ENCODE measurements at regions of chr6 and their contacts with region 1.

Region 1: GRCh38 chr6:138588805-138589434 is 89.6 kb upstream of the NHSL1 start:
- DNase-seq: peak; percentile 46 to 60 (median 52)
- H3K4me3 ChIP-seq: no peak overlapping the region
- H3K4me3 Mint-ChIP-seq: no peak overlapping the region
- H3K27ac ChIP-seq: no peak overlapping the region
- H3K27ac Mint-ChIP-seq: peak overlapping the region in 1 of 7 donors; percentile 0
- H3K4me1 ChIP-seq: peaks cover 16% of the 10 kb centered on the region
- H3K4me1 Mint-ChIP-seq: peaks cover 14 to 20% (median 19%) of the 10 kb centered on the region in 4 donors
- H3K27me3 ChIP-seq: no peaks in the 10 kb centered on the region
- H3K27me3 Mint-ChIP-seq: peaks cover 0 to 2% of the 10 kb centered on the region in 2 donors

Region 2: DNA sequence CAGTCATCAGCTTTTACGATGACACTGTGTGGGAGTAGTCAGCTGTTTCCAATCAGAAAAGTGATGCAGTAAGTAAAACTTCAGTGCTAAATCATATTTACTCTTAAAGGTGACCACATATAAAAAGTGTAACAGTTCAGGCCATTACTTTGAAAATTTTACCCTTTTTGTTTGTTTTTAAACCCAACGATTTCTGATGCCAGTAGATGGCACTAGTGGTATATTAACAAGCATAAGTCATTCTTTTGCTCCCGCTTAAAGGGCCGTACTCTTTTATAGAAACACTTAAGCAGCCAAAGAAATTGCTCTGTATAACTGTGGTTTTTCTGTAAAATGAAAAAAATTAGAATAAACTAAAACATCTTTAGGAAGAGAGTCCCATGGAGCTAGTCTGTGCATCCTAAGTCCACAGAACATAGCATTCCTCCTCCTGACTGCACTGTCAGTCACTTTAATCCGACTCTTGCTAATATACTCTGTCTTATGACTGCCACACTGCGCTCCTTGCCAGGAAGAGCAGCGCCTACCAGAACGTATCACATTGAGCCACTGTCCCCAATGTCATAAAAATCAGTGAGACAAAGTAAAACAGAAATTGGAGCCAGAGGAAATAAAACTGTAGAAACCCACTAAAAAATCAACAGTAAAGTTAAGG is 159.8 kb before region 1 on chr6:
- CTCF ChIA-PET with region 1: interaction called, 13 read pairs
- POLR2A ChIA-PET with region 1: no interaction called
- intact Hi-C with region 1: loop called (anchors 1 kb)
- DNase-seq: peak in 4 of 5 donors; percentile 45 to 55 (median 46)
- H3K4me3 ChIP-seq: no peak overlapping the region
- H3K4me3 Mint-ChIP-seq: no peak overlapping the region
- H3K27ac ChIP-seq: no peak overlapping the region
- H3K27ac Mint-ChIP-seq: no peak overlapping the region
- H3K4me1 ChIP-seq: peaks cover 4% of the 10 kb centered on the region
- H3K4me1 Mint-ChIP-seq: no peaks in the 10 kb centered on the region
- H3K27me3 ChIP-seq: no peaks in the 10 kb centered on the region
- H3K27me3 Mint-ChIP-seq: peaks cover 0 to 1% of the 10 kb centered on the region in 2 donors

Region 3: DNA sequence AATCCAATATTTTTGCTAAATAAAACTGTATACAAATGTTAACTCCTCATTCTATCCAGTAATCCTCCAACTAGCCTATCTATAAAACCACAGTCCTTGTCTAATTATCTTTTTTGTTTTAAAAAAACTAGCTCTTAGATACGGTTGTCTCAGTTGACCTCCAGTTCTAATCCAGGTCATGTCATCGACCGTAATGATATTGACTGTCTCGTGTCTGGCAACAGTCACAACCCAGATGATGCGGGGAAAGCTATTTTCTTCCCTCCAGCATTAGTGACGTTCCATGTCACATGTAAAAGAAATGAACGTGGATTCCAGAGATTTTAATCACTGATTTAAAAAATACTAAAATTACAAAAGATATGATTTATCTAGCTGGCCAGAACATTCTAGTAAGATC is 149.4 kb before region 1 on chr6:
- CTCF ChIA-PET with region 1: no interaction called
- POLR2A ChIA-PET with region 1: no interaction called
- intact Hi-C with region 1: no loop called
- DNase-seq: no peak
- H3K4me3 ChIP-seq: no peak overlapping the region
- H3K4me3 Mint-ChIP-seq: no peak overlapping the region
- H3K27ac ChIP-seq: no peak overlapping the region
- H3K27ac Mint-ChIP-seq: no peak overlapping the region
- H3K4me1 ChIP-seq: no peaks in the 10 kb centered on the region
- H3K4me1 Mint-ChIP-seq: no peaks in the 10 kb centered on the region
- H3K27me3 ChIP-seq: no peaks in the 10 kb centered on the region
- H3K27me3 Mint-ChIP-seq: no peaks in the 10 kb centered on the region

Region 4: DNA sequence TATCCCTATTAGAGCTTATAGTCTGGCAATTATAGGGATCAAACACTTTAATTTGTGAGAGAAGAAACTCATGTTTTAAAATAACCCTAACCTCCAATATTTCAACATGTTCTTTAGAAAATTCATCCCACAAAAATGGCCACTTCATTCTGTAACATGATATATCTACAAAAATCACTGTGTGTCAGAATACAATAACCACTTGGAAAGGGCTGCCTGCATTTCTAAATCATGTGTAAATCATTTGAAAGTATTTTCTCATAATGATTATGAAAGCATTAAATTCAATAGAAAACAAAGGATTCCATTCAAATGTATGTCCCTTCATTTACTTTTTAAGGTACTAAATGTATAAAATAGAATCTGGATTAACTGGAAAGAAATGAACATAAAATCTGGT is 11.8 kb after region 1 on chr6:
- CTCF ChIA-PET with region 1: interaction called, 17 read pairs
- POLR2A ChIA-PET with region 1: no interaction called
- intact Hi-C with region 1: no loop called
- DNase-seq: no peak
- H3K4me3 ChIP-seq: no peak overlapping the region
- H3K4me3 Mint-ChIP-seq: no peak overlapping the region
- H3K27ac ChIP-seq: no peak overlapping the region
- H3K27ac Mint-ChIP-seq: no peak overlapping the region
- H3K4me1 ChIP-seq: no peaks in the 10 kb centered on the region
- H3K4me1 Mint-ChIP-seq: no peaks in the 10 kb centered on the region
- H3K27me3 ChIP-seq: no peaks in the 10 kb centered on the region
- H3K27me3 Mint-ChIP-seq: peaks cover 6 to 8% of the 10 kb centered on the region in 2 donors

Region 5: GRCh38 chr6:138692058-138692977 is 103.4 kb after region 1 on chr6:
- CTCF ChIA-PET with region 1: no interaction called
- POLR2A ChIA-PET with region 1: no interaction called
- intact Hi-C with region 1: loop called (anchors 5 kb)
- DNase-seq: peak; percentile 35 to 65 (median 37)
- H3K4me3 ChIP-seq: peak overlapping the region in 1 of 2 donors; percentile 24
- H3K4me3 Mint-ChIP-seq: peak overlapping the region; percentile 77 to 87 (median 84)
- H3K27ac ChIP-seq: no peak overlapping the region
- H3K27ac Mint-ChIP-seq: peak overlapping the region in 3 of 7 donors; percentile 12 to 72 (median 32)
- H3K4me1 ChIP-seq: peaks cover 6% of the 10 kb centered on the region
- H3K4me1 Mint-ChIP-seq: peaks cover 3 to 15% (median 8%) of the 10 kb centered on the region in 4 donors
- H3K27me3 ChIP-seq: peaks cover 6% of the 10 kb centered on the region
- H3K27me3 Mint-ChIP-seq: peaks cover 13 to 15% of the 10 kb centered on the region in 2 donors

Region 6: GRCh38 chr6:138805016-138805765 is 216.3 kb after region 1 on chr6:
- CTCF ChIA-PET with region 1: no interaction called
- POLR2A ChIA-PET with region 1: no interaction called
- intact Hi-C with region 1: no loop called
- DNase-seq: no peak
- H3K4me3 ChIP-seq: no peak overlapping the region
- H3K4me3 Mint-ChIP-seq: no peak overlapping the region
- H3K27ac ChIP-seq: no peak overlapping the region
- H3K27ac Mint-ChIP-seq: no peak overlapping the region
- H3K4me1 ChIP-seq: no peaks in the 10 kb centered on the region
- H3K4me1 Mint-ChIP-seq: no peaks in the 10 kb centered on the region
- H3K27me3 ChIP-seq: no peaks in the 10 kb centered on the region
- H3K27me3 Mint-ChIP-seq: peaks cover 3 to 5% of the 10 kb centered on the region in 2 donors

Region 7: DNA sequence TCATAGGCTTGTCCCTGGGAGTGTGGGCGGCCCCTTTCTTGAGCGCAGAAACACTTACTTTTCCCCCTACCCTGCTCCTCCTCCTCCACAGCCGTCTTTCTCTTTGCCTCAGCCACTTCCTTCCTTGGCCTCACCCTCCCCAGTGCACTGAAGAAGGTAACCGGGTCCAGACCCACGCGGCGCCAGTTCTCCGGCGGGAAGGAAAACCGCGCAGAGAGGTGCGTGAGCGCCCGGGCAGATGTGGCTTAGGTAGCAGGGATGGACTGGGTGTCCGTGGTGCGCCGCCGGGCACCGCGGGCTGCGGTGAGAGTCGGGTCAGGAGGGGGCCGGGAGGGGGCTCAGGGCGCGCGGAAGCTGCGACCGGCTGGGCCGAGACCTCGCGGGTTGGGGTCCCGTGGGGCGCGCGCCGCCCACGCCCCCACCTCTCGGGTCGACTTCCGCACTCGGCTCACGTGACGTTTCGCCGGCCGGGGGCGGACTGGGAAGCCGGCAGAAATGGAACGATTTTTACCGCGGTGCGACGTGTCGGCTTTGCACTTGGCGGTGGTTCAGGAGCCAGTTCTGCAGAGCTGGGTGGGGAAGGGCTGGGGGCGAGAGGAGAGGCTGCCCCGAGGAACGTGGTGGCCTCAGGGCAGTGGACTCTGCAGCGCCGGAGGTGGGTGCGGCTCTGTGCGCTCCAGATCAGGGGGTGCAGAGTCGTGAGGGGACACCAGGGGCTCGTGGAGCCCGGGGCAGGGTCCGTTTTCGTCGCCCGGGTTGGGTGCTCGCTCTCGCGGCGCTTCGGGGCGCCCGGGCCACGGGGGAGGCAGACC is 439.9 kb after region 1 on chr6 and contains the start of gene ABRACL:
- CTCF ChIA-PET with region 1: no interaction called
- POLR2A ChIA-PET with region 1: no interaction called
- intact Hi-C with region 1: loop called (anchors 5 kb)
- DNase-seq: peak; percentile 74 to 88 (median 75)
- H3K4me3 ChIP-seq: peak within 1 kb of the TSS; percentile 59 to 97
- H3K4me3 Mint-ChIP-seq: peak within 1 kb of the TSS in 5 of 8 donors; percentile 93 to 98 (median 95)
- H3K27ac ChIP-seq: peak within 1 kb of the TSS; percentile 88
- H3K27ac Mint-ChIP-seq: peak within 1 kb of the TSS; percentile 88 to 98 (median 92)
- H3K4me1 ChIP-seq: peaks cover 46% of the 10 kb centered on the region
- H3K4me1 Mint-ChIP-seq: peaks cover 22 to 34% (median 28%) of the 10 kb centered on the region in 4 donors
- H3K27me3 ChIP-seq: no peaks in the 10 kb centered on the region
- H3K27me3 Mint-ChIP-seq: no peaks in the 10 kb centered on the region
- total RNA-seq, gene ABRACL: 103 to 112 TPM